Activated CD8-positive, alpha-beta T cell treated with anti-CD3 and anti-CD28 coated beads, Interleukin-2, amount 10 ng/mL, durations not matched to agents 7 days and 5 days (primary cell): ENCODE measurements at regions of chr5 and their contacts with region 1.

Region 1: DNA sequence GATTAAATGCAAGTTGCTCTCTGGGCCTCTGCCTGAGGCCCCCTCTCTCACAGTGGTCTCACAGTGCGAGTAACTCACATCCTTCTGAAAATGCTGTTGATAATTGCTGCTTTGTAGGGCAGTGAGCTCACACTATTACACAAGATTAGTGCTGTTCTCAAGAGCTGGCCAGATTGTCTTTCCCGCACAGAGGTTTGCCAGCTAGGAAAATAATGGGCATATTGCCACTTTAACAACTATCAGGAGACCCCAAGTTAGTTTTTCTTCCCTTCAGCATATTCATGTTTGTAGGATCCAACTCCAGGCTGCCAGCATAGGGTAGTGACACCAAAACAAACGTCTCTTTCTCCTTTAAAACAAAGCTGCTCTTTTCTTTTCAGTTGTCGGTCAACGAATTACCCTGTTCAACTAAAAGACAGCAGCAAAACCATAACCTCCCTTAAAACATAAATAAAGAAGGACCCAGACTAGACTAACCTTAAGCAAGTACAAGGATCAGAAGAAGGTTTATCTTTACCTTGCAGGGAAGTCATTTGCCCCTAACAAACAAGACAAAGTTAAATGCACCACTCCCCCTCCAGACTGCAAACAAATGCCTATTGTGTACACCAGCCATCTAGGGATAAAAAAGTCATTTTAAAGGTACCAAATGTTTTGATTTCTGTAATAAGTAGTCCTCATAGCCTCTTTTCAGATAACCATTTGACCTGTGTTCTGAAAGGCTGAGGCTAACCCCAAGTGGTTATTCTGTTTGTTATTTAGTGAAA is 91.4 kb downstream of the VCAN start:
- DNase-seq: no peak
- ATAC-seq: no peak
- H3K4me3 Mint-ChIP-seq: no peak overlapping the region
- H3K27ac Mint-ChIP-seq: no peak overlapping the region
- H3K4me1 Mint-ChIP-seq: peaks cover under 1% of the 10 kb centered on the region
- H3K27me3 Mint-ChIP-seq: peaks cover 25% of the 10 kb centered on the region

Region 2: DNA sequence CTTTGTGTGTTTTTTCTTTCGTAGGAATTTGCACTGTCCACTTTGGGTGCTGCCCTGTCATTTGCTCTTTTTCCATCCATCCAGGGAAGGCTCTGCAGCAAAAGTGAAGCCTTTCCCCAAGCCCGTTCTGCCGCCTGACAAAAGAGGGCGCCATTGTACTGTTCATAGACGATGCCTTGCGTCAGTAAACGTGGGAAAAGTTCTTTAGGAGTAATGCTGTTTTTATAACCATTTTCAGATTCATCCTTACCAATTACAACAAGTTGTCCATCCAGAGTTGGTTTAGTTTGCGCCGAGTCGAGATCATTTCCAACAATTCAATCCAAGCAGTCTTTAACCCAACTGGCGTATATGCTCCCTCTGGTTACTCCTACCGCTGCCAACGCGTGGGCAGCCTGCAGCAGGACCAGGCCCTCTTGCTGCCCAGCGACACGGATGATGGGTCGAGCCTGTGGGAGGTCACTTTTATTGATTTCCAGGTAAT is 1250.6 kb before region 1 on chr5:
- CTCF ChIA-PET with region 1: interaction called, 10 read pairs
- POLR2A ChIA-PET with region 1: no interaction called
- DNase-seq: peak; percentile 54
- ATAC-seq: peak; percentile 60
- H3K4me3 Mint-ChIP-seq: no peak overlapping the region
- H3K27ac Mint-ChIP-seq: no peak overlapping the region
- H3K4me1 Mint-ChIP-seq: peaks cover 3% of the 10 kb centered on the region
- H3K27me3 Mint-ChIP-seq: peaks cover 4% of the 10 kb centered on the region